PC-9 (cell line): ENCODE measurements at regions of chr4 and their contacts with region 1.

Region 1: DNA sequence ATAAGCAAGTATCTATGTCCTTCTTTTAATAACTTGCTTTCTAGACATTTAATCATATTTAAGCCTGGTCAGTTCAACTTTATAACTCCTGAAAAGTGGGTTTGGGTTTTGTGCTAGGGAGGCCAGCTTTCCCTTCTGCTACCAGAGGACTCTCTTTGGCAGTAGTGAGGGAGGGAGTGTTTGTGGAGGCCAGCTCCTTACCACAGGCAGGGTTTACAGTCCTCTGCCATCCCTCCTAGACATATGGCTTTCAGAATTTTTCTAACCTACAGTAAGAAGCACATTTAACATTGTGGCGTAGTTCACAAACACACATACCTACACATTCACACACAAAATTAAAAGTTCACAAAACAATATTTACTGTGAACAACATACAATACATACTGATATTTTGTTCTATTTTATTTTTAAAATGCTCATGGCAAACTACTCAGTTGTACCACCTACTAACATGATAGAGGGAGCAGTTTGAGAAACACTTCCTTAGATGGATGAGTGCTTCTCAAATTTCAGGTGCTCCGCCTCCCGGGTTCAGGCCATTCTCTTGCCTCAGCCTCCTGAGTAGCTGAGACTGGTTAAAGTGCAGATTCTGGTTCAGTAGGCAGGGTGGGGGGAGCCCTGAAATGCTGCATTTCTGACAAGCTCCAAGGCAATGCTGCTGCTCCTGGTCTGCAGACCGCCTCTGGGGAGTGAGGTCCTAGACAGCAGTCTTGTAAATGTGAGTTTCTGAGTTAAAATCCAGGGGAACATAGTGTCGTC is 86.7 kb downstream of the PTTG2 start:
- DNase-seq: no peak
- H3K4me3 ChIP-seq: no peak overlapping the region
- H3K27ac ChIP-seq: no peak overlapping the region
- H3K4me1 ChIP-seq: no peaks in the 10 kb centered on the region
- H3K27me3 ChIP-seq: no peaks in the 10 kb centered on the region
- CTCF ChIP-seq: no peak

Region 2: GRCh38 chr4:37615059-37615719 is 431.7 kb before region 1 on chr4:
- CTCF ChIA-PET with region 1: no interaction called
- POLR2A ChIA-PET with region 1: interaction called, 34 read pairs
- intact Hi-C with region 1: no loop called
- DNase-seq: no peak
- H3K4me3 ChIP-seq: no peak overlapping the region
- H3K27ac ChIP-seq: no peak overlapping the region
- H3K4me1 ChIP-seq: no peaks in the 10 kb centered on the region
- H3K27me3 ChIP-seq: no peaks in the 10 kb centered on the region
- CTCF ChIP-seq: no peak

Region 3: DNA sequence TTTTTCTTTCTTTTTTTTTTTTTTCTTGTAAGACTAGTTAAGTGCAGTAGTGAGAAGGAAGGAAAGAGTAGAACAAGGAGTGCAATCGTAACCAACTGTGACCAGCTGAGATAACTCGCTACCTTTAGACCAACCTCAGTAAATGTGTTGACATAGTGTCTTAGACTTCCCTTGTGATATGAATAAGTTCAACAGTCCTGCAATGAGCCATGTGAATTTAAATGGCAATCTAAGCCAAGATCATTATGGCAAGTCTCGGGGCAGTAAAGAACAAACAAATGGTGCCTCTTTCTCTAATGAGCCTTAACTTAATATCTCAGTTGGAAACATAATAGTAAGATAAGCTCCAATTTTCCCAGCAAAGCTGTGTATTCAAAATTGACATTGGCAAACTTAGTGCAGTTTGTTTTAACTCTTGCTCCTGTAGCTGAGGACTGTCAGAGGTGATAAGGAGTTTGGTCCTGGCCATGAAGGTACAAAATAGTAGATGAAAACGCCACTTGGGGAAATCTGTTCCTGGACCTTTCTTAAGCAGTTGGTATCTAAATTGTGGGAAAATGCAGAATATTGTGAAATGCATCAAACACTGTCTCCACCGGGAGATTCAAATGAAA is 346.9 kb before region 1 on chr4:
- CTCF ChIA-PET with region 1: no interaction called
- POLR2A ChIA-PET with region 1: no interaction called
- intact Hi-C with region 1: no loop called
- DNase-seq: no peak
- H3K4me3 ChIP-seq: no peak overlapping the region
- H3K27ac ChIP-seq: no peak overlapping the region
- H3K4me1 ChIP-seq: no peaks in the 10 kb centered on the region
- H3K27me3 ChIP-seq: no peaks in the 10 kb centered on the region
- CTCF ChIP-seq: no peak

Region 4: GRCh38 chr4:37860266-37860665 is 186.6 kb before region 1 on chr4:
- CTCF ChIA-PET with region 1: interaction called, 12 read pairs
- POLR2A ChIA-PET with region 1: no interaction called
- intact Hi-C with region 1: no loop called
- DNase-seq: no peak
- H3K4me3 ChIP-seq: no peak overlapping the region
- H3K27ac ChIP-seq: no peak overlapping the region
- H3K4me1 ChIP-seq: no peaks in the 10 kb centered on the region
- H3K27me3 ChIP-seq: no peaks in the 10 kb centered on the region
- CTCF ChIP-seq: no peak

Region 5: GRCh38 chr4:38634047-38634759 is 587.3 kb after region 1 on chr4:
- CTCF ChIA-PET with region 1: no interaction called
- POLR2A ChIA-PET with region 1: no interaction called
- intact Hi-C with region 1: no loop called
- DNase-seq: no peak
- H3K4me3 ChIP-seq: no peak overlapping the region
- H3K27ac ChIP-seq: no peak overlapping the region
- H3K4me1 ChIP-seq: no peaks in the 10 kb centered on the region
- H3K27me3 ChIP-seq: no peaks in the 10 kb centered on the region
- CTCF ChIP-seq: no peak